ENCODE measurements at regions of chr1 and their contacts with region 1.

Region 1: DNA sequence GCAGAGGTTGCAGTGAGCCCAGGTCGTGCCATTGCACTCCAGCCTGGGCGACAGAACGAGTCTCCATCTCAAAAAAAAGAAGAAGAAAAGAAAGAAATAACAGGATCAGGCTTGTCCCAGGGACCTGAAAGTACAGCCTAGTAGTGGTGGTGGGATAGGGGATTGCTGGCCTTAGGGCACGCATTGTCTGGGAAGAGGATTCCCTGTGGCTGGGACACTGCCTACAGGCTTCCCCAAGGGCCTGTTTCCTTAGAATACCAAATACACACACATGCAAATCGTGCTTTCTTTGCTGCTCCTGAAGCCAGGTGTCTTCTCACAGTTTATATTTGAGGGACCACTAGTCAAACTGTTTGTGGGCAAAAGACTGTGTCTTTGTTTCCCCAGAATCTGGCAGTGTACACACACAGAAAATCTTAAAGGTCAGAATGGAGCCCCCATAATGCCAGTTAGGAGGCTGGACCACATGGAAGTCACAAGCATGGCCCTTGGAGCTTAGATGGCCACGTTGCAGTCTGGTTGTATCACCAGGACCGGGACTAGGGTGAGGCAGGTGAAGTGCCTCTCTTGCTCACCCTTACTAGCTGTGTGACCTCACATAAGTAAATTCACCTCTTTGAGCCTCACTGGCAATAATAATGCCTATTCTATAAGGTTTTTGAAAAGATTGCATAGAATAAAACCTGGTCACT is 12.7 kb upstream of the ASAP3 start:
- DNase-seq: no peak
- H3K4me3 ChIP-seq: no peak overlapping the region
- H3K27ac ChIP-seq: no peak overlapping the region
- H3K4me1 ChIP-seq: no peaks in the 10 kb centered on the region
- H3K27me3 ChIP-seq: no peaks in the 10 kb centered on the region
- CTCF ChIP-seq: no peak
- EP300 ChIP-seq: no peak
- POLR2A ChIP-seq: no peak
- RAD21 ChIP-seq: no peak

Region 2: DNA sequence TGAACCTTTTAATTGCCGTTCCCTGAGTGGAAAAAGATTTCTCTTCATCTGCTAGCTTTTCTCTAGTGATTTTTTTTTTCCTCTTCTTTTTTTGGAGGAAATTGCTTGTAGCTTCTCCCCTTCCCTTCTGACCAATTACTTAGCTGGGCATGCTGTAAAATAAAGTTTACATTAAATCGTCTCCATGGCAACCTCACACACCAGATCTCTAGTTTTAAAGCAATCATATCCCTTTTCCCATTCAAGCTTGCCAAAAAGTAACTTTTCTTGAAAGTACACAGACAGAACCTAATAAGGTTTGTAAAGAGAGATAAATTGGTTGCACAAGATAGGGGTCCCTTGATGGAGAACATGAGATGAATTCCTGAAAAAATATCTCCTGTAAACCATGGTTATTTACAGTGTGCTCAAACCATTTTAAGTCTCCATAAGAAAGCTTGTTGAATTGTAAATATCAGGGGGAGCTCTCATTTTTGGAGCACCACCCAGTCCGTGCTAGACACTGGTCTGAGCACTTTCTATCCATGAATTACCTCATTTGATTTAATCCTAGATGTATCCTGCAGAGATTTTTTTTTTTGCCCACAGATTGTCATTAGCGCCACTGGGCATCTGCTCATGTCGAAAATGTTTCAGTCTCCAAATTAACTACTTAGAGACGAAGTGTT is 246.7 kb before region 1 on chr1:
- CTCF ChIA-PET with region 1: no interaction called
- POLR2A ChIA-PET with region 1: no interaction called
- DNase-seq: no peak
- H3K4me3 ChIP-seq: no peak overlapping the region
- H3K27ac ChIP-seq: no peak overlapping the region
- H3K4me1 ChIP-seq: peaks cover 0 to 9% (median 0%) of the 10 kb centered on the region in 4 experiments; a peak in 2 of 7 replicates
- H3K27me3 ChIP-seq: no peaks in the 10 kb centered on the region
- CTCF ChIP-seq: no peak
- EP300 ChIP-seq: no peak
- POLR2A ChIP-seq: no peak
- RAD21 ChIP-seq: no peak

Region 3: GRCh38 chr1:23422241-23423030 is 74.2 kb before region 1 on chr1:
- CTCF ChIA-PET with region 1: interaction called, 12 read pairs
- POLR2A ChIA-PET with region 1: no interaction called
- DNase-seq: no peak
- H3K4me3 ChIP-seq: no peak overlapping the region
- H3K27ac ChIP-seq: no peak overlapping the region
- H3K4me1 ChIP-seq: peaks cover 1 to 11% (median 3%) of the 10 kb centered on the region in 4 experiments; a peak in 6 of 7 replicates
- H3K27me3 ChIP-seq: peaks cover 78 to 95% (median 93%) of the 10 kb centered on the region in 4 experiments
- CTCF ChIP-seq: no peak
- EP300 ChIP-seq: no peak
- POLR2A ChIP-seq: no peak
- RAD21 ChIP-seq: no peak

Region 4: GRCh38 chr1:23484253-23485001 is 12.2 kb before region 1 on chr1:
- CTCF ChIA-PET with region 1: interaction called, 27 read pairs
- POLR2A ChIA-PET with region 1: interaction called, 4 read pairs
- DNase-seq: peak; percentile 71 to 93
- H3K4me3 ChIP-seq: peak overlapping the region; percentile 49 to 97 (median 78)
- H3K27ac ChIP-seq: no peak overlapping the region
- H3K4me1 ChIP-seq: peaks cover 2 to 4% (median 3%) of the 10 kb centered on the region in 4 experiments; a peak in 6 of 7 replicates
- H3K27me3 ChIP-seq: peaks cover 0 to 6% (median 3%) of the 10 kb centered on the region in 4 experiments; a peak in 4 of 7 replicates
- CTCF ChIP-seq: no peak
- EP300 ChIP-seq: no peak
- POLR2A ChIP-seq: no peak
- RAD21 ChIP-seq: no peak

Region 5: GRCh38 chr1:23530747-23531561 is 34.3 kb after region 1 on chr1 and contains the start of gene E2F2:
- CTCF ChIA-PET with region 1: interaction called, 230 read pairs
- POLR2A ChIA-PET with region 1: interaction called, 5 read pairs
- DNase-seq: peak; percentile 57 to 80
- H3K4me3 ChIP-seq: peak within 1 kb of the TSS; percentile 51 to 78 (median 56)
- H3K27ac ChIP-seq: peak within 1 kb of the TSS; percentile 48; the same call in 1 of the 2 replicates
- H3K4me1 ChIP-seq: peaks cover 5 to 13% (median 9%) of the 10 kb centered on the region in 4 experiments
- H3K27me3 ChIP-seq: peaks cover 3 to 27% (median 18%) of the 10 kb centered on the region in 4 experiments
- CTCF ChIP-seq: peak; percentile 1 to 37 (median 32); a peak in 3 of 4 replicates
- EP300 ChIP-seq: no peak
- POLR2A ChIP-seq: peak in 1 of 2 experiments; percentile 75; a peak in 2 of 3 replicates
- RAD21 ChIP-seq: peak; percentile 25 to 29; a peak in 1 of 4 replicates
- total RNA-seq, gene E2F2: 6.1 and 7.0 TPM in 2 replicates

Region 6: DNA sequence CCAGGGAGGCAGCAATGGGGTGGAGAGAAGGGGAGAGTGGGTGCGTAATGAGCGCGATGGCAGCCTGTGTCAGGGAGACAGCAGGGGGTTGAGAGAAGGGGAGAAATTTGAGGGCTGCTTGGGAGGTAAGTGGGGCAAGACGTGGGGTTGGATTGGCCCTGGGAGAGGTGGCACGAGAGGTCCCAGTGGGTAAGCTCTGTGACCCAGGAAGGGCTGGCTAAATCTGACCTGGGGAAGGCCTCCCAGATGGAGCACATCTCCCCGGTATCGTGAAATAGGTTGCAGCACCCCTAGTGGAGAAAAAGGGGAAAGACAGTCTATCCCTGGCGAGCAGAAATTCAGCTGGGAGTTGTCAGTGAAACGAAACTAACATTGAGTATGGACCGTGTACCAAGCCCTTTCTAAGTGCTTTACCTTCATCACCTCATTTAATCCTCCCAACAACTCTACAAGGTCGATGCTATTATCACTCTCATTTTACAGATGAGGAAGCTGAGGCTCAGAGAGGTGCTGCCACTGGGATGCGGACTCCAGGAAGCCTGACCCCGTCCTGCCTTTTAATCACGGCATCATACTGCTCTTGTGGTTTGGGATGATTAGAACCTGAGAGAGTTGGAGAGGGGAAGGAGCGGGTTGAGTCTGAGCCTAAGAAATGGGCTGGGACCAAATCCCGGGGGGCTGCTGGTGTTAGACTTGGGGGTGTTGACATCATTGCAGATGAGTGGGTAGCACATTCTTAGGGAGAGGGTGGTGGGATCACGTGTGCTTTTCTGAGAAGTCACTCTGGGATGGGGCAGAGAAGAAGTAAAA is 138.4 kb after region 1 on chr1:
- CTCF ChIA-PET with region 1: interaction called, 51 read pairs
- POLR2A ChIA-PET with region 1: no interaction called
- DNase-seq: peak in 1 of 2 experiments; percentile 71
- H3K4me3 ChIP-seq: no peak overlapping the region
- H3K27ac ChIP-seq: no peak overlapping the region
- H3K4me1 ChIP-seq: peaks cover 0 to 17% (median under 1%) of the 10 kb centered on the region in 4 experiments; a peak in 5 of 7 replicates
- H3K27me3 ChIP-seq: no peaks in the 10 kb centered on the region
- CTCF ChIP-seq: peak; percentile 60 to 97 (median 74)
- EP300 ChIP-seq: no peak
- POLR2A ChIP-seq: no peak
- RAD21 ChIP-seq: peak; percentile 74 to 85

Region 7: DNA sequence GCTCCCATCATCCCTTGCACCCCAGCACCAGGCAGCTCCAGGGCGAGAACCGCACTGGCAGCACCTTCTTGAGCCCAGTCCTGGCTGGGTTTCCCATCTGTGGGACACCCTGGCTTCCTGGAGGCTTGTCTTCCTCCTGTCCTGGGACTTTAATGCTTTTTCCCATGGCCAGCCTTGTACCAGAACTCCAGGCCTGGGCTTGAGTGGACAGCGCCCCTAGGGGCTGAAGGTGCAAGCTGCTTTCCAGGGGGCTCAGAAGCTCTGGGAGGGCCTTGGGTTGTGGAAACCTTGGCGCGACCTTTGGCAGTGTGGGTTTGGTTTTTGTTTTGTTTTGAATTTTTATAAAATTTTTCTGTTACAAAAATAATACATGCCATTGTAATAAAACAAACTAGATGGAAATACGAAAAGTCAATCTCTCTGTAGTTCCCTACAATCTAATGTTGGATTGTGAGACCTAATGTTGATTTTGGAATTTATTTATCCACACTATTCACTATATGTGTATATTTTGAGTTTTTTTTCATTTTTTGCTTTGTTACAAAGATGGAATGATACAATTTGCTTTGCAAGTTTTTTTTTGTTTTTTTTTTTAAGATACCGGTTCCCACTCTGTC is 161.1 kb after region 1 on chr1:
- CTCF ChIA-PET with region 1: interaction called, 25 read pairs
- POLR2A ChIA-PET with region 1: no interaction called
- DNase-seq: peak; percentile 50 to 91
- H3K4me3 ChIP-seq: no peak overlapping the region
- H3K27ac ChIP-seq: no peak overlapping the region
- H3K4me1 ChIP-seq: no peaks in the 10 kb centered on the region
- H3K27me3 ChIP-seq: no peaks in the 10 kb centered on the region
- CTCF ChIP-seq: peak; percentile 81 to 98 (median 90)
- EP300 ChIP-seq: no peak
- POLR2A ChIP-seq: no peak
- RAD21 ChIP-seq: peak; percentile 66 to 76

Region 8: DNA sequence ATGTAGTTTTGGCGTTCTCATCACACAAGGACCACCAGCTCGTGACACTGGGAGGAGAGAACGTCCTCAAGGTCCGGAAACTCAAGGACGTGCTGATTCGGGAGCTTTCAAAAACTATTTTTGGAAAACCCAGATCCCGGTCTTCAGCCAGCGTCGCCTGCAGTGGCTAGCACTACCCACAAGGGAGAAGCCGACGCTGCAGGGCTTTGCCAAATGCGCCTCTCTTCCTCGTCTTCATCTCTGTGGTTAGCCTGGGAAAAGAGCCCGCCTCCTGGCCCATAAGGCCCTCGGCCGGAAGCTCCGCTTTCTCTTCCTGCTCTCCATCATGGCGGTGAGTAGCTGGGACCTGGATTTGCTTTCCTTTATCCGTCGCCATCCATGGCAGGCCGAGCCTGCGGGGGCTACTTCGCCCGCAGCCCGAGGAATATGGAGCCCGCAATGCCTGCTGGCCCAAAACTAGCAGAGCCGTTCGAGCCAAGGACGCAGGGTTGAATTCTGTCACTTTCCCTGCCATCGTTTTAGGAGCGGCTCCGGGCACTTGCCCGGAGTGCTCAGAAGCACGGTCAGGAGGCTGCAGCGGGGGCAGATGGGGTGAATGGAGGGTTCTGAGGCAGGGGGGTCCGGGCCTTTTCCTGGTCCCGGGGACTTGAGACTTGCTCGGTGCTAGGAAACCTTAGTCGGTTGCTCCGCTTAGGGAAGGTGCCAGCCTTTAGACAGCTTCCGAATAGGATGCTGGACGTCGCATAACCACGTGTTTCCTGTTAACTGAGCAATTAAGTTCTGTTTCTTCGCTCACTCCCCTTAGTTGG is 195.1 kb after region 1 on chr1 and contains the start of gene RPL11:
- CTCF ChIA-PET with region 1: interaction called, 11 read pairs
- POLR2A ChIA-PET with region 1: interaction called, 10 read pairs
- DNase-seq: peak; percentile 84 to 88
- H3K4me3 ChIP-seq: peak within 1 kb of the TSS; percentile 82 to 100 (median 92)
- H3K27ac ChIP-seq: peak within 1 kb of the TSS; percentile 93
- H3K4me1 ChIP-seq: peaks cover 0 to 13% (median 6%) of the 10 kb centered on the region in 4 experiments; a peak in 4 of 7 replicates
- H3K27me3 ChIP-seq: no peaks in the 10 kb centered on the region
- CTCF ChIP-seq: peak; percentile 67 to 77 (median 76)
- EP300 ChIP-seq: no peak
- POLR2A ChIP-seq: peak; percentile 97 to 99
- RAD21 ChIP-seq: no peak
- total RNA-seq, gene RPL11: 1,426 and 1,499 TPM in 2 replicates